A549 (cell line): ENCODE measurements at regions of chr1 and their contacts with region 1.

Region 1: GRCh38 chr1:1122078-1122811 is 6.4 kb upstream of the C1orf159 start:
- DNase-seq: peak; percentile 58 to 76
- ATAC-seq: peak; percentile 90 to 95
- H3K4me3 ChIP-seq: no peak overlapping the region
- H3K27ac ChIP-seq: peak overlapping the region in 1 of 2 experiments; percentile 67; a peak in 3 of 6 replicates
- H3K4me1 ChIP-seq: peaks cover 4% of the 10 kb centered on the region; the same call in 1 of the 3 replicates
- CTCF ChIP-seq: peak; percentile 79
- EP300 ChIP-seq: no peak
- POLR2A ChIP-seq: no peak
- RAD21 ChIP-seq: peak; percentile 86 to 93

Region 2: DNA sequence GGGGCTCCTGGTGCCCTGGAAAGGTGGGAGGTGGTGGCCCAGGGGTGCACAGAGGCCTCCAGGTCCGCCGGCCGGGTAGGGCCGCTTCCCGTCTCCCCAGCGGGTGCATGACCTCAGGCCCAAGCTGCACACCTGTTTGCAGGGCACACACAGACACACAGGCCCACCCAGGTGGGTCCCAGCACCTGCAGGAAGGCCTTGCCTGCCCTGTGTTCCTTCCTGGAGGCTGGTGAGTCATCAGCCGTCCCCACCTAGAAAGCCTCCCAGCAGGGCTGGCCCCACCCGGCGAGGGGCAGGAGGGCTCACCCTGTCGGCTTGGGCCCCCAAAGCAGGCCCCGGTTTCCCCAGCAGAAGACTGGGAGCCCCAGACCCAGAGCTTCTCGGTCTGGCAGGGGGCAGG is 27.9 kb after region 1 on chr1:
- CTCF ChIA-PET with region 1: interaction called, 11 read pairs
- POLR2A ChIA-PET with region 1: no interaction called
- DNase-seq: no peak
- ATAC-seq: no peak; a peak in 1 of 6 replicates
- H3K4me3 ChIP-seq: no peak overlapping the region
- H3K27ac ChIP-seq: no peak overlapping the region
- H3K4me1 ChIP-seq: no peaks in the 10 kb centered on the region
- CTCF ChIP-seq: no peak
- EP300 ChIP-seq: no peak
- POLR2A ChIP-seq: no peak
- RAD21 ChIP-seq: no peak

Region 3: GRCh38 chr1:1206376-1207260 is 84.4 kb after region 1 on chr1 and contains the start of gene TNFRSF18:
- CTCF ChIA-PET with region 1: interaction called, 12 read pairs
- POLR2A ChIA-PET with region 1: no interaction called
- DNase-seq: no peak
- ATAC-seq: no peak
- H3K4me3 ChIP-seq: no peak within 1 kb of the TSS
- H3K27ac ChIP-seq: no peak within 1 kb of the TSS
- H3K4me1 ChIP-seq: 0 out of 3 replicates have a peak, but pooled peaks cover 3% of the 10 kb centered on the region
- CTCF ChIP-seq: no peak
- EP300 ChIP-seq: no peak
- POLR2A ChIP-seq: no peak
- RAD21 ChIP-seq: no peak
- polyA plus RNA-seq, gene TNFRSF18: not detected in 2 replicates

Region 4: GRCh38 chr1:1231400-1232223 is 109.4 kb after region 1 on chr1 and contains the start of gene SDF4:
- CTCF ChIA-PET with region 1: interaction called, 46 read pairs
- POLR2A ChIA-PET with region 1: no interaction called
- DNase-seq: peak; percentile 92 to 95
- ATAC-seq: peak; percentile 88 to 94
- H3K4me3 ChIP-seq: peak within 1 kb of the TSS; percentile 97
- H3K27ac ChIP-seq: peak within 1 kb of the TSS; percentile 98 to 100
- H3K4me1 ChIP-seq: peaks cover 18% of the 10 kb centered on the region; the same call in 2 of the 3 replicates
- CTCF ChIP-seq: no peak
- EP300 ChIP-seq: no peak
- POLR2A ChIP-seq: peak; percentile 83
- RAD21 ChIP-seq: no peak
- polyA plus RNA-seq, gene SDF4: 38.7 and 58.3 TPM in 2 replicates

Region 5: DNA sequence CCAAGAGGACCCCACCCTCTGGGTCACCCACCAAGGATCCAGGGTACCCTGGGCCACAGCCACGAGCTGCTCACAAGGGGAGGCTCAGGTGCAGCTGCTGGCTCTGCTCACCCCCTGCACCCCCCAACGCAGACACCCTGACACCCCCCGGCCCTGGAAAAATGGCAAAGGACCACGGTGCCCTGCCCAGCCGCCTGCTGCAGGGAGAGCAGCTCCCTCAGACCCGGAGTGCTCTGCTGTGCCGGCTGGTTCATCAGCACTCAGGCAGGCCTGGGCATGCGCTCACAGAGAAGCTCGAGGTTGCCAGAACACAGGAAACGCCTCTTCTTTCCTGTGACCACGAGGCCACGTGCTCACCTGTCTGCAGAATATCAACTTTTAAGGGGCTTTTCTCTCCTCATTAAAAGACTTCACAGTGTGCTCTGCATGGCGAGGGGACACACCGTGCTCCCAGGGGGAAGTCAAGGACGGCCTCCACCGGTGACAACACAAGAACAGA is 128.6 kb after region 1 on chr1:
- CTCF ChIA-PET with region 1: interaction called, 34 read pairs
- POLR2A ChIA-PET with region 1: no interaction called
- DNase-seq: no peak
- ATAC-seq: peak in 1 of 2 experiments; percentile 22; a peak in 2 of 6 replicates
- H3K4me3 ChIP-seq: no peak overlapping the region
- H3K27ac ChIP-seq: peak overlapping the region in 1 of 2 experiments; percentile 53; a peak in 2 of 6 replicates
- H3K4me1 ChIP-seq: no peaks in the 10 kb centered on the region
- CTCF ChIP-seq: no peak
- EP300 ChIP-seq: no peak
- POLR2A ChIP-seq: no peak
- RAD21 ChIP-seq: no peak

Region 6: DNA sequence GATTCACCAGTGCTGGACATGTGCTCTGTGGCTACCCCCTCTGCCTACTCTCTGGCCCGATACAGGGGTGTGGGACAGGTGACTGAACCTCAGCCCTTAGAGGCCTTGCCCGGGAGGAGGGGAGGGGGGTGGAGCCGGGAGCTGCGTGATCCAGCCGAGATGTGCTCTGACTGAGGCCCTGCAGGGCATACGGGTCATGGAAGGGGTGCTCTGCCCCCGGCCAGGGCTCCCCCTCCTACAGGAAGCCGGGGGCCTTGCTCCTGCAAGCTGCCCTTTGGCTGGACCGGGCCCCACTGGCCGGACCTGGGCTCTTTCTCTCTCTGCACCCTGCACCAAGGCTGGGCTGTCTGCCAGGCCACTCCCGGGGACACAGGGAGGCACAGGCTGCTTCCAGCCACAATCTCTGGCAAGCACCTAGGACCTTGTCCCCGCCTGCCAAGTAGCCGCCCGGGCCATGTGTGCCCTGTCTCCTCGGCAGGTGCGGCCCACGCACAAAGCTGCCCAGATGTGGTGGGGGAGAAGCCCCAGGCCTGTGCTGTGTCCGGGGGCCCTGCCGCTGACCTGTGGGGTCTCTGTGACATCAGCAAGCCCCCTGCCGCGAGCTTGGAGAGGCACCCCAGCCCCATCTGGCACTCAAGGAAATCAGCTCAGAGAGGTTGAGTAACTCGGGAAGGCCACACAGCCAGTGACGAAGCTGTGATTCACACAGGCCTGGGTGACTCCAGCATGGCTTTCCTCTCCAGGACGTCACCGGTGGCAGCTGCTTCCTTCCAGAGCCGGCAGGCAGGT is 159.5 kb after region 1 on chr1:
- CTCF ChIA-PET with region 1: interaction called, 15 read pairs
- POLR2A ChIA-PET with region 1: no interaction called
- DNase-seq: peak in 1 of 2 experiments; percentile 59
- ATAC-seq: peak; percentile 40 to 61
- H3K4me3 ChIP-seq: no peak overlapping the region
- H3K27ac ChIP-seq: peak overlapping the region in 1 of 2 experiments; percentile 10; a peak in 1 of 6 replicates
- H3K4me1 ChIP-seq: peaks cover 8% of the 10 kb centered on the region; the same call in 2 of the 3 replicates
- CTCF ChIP-seq: no peak
- EP300 ChIP-seq: no peak
- POLR2A ChIP-seq: no peak
- RAD21 ChIP-seq: no peak